H1 (cell line): ENCODE measurements at regions of chr10 and their contacts with region 1.

Region 1: DNA sequence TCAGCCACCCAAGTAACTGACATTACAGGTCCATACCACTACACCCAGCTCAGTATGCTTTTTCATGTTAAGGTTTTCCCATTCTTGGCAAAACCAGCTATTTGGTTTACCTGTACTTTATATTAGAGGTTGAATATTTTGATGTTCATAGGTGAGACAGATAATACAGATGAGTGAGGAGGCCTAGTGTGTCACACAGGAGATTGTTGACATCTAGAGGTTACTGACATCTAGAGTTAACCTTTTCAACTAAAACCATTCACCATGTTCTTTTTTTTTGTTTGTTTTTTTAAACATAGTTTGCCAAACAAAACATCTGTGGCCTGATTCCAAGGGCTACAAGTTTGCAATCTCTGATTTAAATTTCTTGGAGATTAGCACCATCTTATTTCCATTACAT is 8.0 kb downstream of the GHITM start:
- DNase-seq: no peak
- H3K4me3 ChIP-seq: no peak overlapping the region
- H3K27ac ChIP-seq: no peak overlapping the region
- H3K4me1 ChIP-seq: no peaks in the 10 kb centered on the region
- H3K27me3 ChIP-seq: no peaks in the 10 kb centered on the region
- CTCF ChIP-seq: no peak
- EP300 ChIP-seq: no peak
- POLR2A ChIP-seq: no peak
- RAD21 ChIP-seq: no peak

Region 2: GRCh38 chr10:84054743-84055142 is 92.6 kb before region 1 on chr10:
- CTCF ChIA-PET with region 1: interaction called, 10 read pairs
- POLR2A ChIA-PET with region 1: no interaction called
- DNase-seq: no peak
- H3K4me3 ChIP-seq: no peak overlapping the region
- H3K27ac ChIP-seq: no peak overlapping the region
- H3K4me1 ChIP-seq: peaks cover 0 to 4% (median 1%) of the 10 kb centered on the region in 4 experiments; a peak in 1 of 7 replicates
- H3K27me3 ChIP-seq: no peaks in the 10 kb centered on the region
- CTCF ChIP-seq: peak; percentile 41 to 53 (median 50)
- EP300 ChIP-seq: no peak
- POLR2A ChIP-seq: no peak
- RAD21 ChIP-seq: peak; percentile 31 to 35; a peak in 2 of 4 replicates

Region 3: GRCh38 chr10:84194424-84195040 is 47.2 kb after region 1 on chr10 and contains the start of gene CDHR1:
- CTCF ChIA-PET with region 1: interaction called, 248 read pairs
- POLR2A ChIA-PET with region 1: interaction called, 4 read pairs
- DNase-seq: peak in 1 of 2 experiments; percentile 77
- H3K4me3 ChIP-seq: peak within 1 kb of the TSS; percentile 55 to 66 (median 63)
- H3K27ac ChIP-seq: no peak within 1 kb of the TSS
- H3K4me1 ChIP-seq: peaks cover 0 to 5% (median 2%) of the 10 kb centered on the region in 4 experiments; a peak in 4 of 7 replicates
- H3K27me3 ChIP-seq: peaks cover 2 to 36% (median 31%) of the 10 kb centered on the region in 4 experiments
- CTCF ChIP-seq: no peak
- EP300 ChIP-seq: no peak
- POLR2A ChIP-seq: no peak
- RAD21 ChIP-seq: no peak
- total RNA-seq, gene CDHR1: 8.7 and 10.5 TPM in 2 replicates